ENCODE measurements at regions of chr12 and their contacts with region 1.

Region 1: DNA sequence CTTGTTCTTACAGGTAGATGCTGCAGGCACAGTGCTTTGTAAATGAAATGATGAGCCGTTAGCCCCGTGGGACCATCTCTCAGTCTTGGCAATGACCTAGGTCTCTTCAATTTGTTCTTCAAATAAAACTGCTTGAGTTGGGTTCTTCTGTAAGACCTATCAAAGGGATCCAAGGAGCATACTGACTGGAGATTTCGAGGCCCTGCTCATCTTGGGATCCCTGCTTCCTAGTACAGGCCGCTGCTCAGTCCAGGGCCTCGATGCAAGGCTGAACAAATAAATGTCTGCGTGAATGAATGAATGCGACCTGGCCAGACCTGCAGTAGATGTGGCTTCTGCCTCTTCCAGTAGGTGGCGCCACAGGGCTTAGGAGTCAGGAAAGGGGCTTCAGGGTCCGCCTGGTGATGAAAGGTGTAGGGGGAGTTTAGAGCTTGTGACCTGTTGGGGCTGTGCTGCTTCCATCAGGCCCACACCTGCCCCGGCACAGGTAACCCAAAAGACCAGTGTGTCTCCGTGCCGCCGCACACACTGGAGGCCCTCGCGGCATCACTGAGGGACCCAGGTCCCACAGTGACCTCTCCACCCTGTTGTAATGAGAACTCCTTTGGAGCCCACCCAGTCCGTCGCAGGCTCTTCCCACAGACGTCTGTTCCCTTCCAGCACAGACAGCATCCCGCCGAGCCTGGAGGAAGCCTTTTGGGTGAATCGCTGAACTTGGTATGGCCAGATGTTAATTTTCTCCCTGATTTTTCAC is 4.4 kb downstream of the CACNA1C start:
- DNase-seq: peak; percentile 62
- ATAC-seq: no peak
- H3K4me3 ChIP-seq: no peak overlapping the region
- H3K27ac ChIP-seq: no peak overlapping the region
- H3K4me1 ChIP-seq: peaks cover 5% of the 10 kb centered on the region; the same call in 1 of the 2 replicates
- H3K27me3 ChIP-seq: no peaks in the 10 kb centered on the region; the same call in 1 of the 2 replicates
- CTCF ChIP-seq: peak; percentile 71
- POLR2A ChIP-seq: no peak
- RAD21 ChIP-seq: peak; percentile 91

Region 2: DNA sequence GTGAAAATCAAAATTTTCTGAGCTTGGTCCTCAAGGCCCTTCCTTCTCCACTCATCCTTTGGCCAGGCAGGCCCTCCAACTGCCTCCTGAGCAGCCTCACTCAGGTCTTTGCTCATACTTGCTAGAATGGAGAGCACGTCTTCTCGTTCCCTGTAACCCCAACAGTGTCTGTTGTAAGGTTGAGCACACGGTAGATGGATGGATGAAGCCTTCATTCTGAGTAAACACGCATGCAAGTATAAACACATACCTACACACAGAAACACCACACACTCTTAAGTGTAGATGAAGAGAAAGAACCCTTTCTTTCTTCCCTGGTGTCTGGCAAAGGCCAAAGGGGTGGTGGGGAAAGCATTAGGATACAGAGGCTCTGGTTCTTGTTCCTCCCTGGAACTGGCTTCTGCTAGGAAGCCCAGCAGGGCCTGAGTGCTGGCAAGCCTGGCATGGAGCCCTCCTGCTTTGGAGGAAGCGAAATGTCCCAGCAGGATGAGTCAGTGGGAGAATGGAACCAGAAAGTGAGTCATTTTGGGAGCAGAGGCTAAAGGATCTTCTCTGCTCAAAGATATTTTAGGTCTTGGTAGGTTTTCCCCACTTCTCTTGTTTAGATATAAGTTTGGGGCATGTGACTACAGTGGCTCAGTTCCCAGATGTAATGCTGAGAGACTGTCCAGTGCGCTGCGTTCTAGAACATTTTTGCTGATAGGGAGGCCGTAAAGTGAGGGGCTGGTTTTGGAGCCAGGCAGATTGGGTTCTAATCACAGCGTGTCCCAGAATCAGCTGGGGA is 122.9 kb after region 1 on chr12:
- CTCF ChIA-PET with region 1: no interaction called
- POLR2A ChIA-PET with region 1: no interaction called
- dilution Hi-C with region 1: no loop called
- in situ Hi-C with region 1: no loop called
- intact Hi-C with region 1: loop called (anchors 5 kb)
- DNase-seq: peak; percentile 98
- ATAC-seq: peak; percentile 83
- H3K4me3 ChIP-seq: no peak overlapping the region
- H3K27ac ChIP-seq: peak overlapping the region; percentile 68
- H3K4me1 ChIP-seq: peaks cover 24% of the 10 kb centered on the region
- H3K27me3 ChIP-seq: no peaks in the 10 kb centered on the region
- CTCF ChIP-seq: no peak
- POLR2A ChIP-seq: no peak
- RAD21 ChIP-seq: peak; percentile 27; the same call in 1 of the 2 replicates

Region 3: DNA sequence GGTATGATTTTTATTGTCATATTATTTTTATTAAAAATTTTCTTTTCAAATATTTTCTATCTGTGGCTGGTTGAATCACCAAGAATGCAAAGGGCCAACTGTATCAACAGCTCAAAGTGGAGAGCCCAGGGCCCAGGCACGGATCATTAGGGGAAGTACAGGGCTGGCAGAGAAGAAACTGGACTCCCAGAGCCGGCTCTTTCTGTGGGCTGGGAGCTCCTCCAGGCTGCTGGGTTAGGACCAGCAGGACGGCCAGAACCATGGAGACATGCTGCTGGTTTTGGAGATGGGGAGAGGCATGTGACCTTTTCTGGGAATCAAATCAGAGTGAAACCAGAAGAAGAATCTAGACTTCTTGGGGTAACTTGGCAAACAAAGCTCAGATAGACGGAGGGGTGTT is 216.1 kb after region 1 on chr12:
- CTCF ChIA-PET with region 1: interaction called, 3 read pairs
- POLR2A ChIA-PET with region 1: no interaction called
- dilution Hi-C with region 1: no loop called
- in situ Hi-C with region 1: no loop called
- intact Hi-C with region 1: loop called (anchors 2 kb)
- DNase-seq: peak; percentile 83
- ATAC-seq: peak; percentile 78
- H3K4me3 ChIP-seq: no peak overlapping the region
- H3K27ac ChIP-seq: no peak overlapping the region
- H3K4me1 ChIP-seq: peaks cover 14% of the 10 kb centered on the region
- H3K27me3 ChIP-seq: no peaks in the 10 kb centered on the region
- CTCF ChIP-seq: peak; percentile 75
- POLR2A ChIP-seq: no peak
- RAD21 ChIP-seq: peak; percentile 81

Region 4: GRCh38 chr12:2395354-2395977 is 338.2 kb after region 1 on chr12:
- CTCF ChIA-PET with region 1: interaction called, 3 read pairs
- POLR2A ChIA-PET with region 1: no interaction called
- dilution Hi-C with region 1: no loop called
- in situ Hi-C with region 1: no loop called
- intact Hi-C with region 1: loop called (anchors 2 kb)
- DNase-seq: peak; percentile 28
- ATAC-seq: peak; percentile 57
- H3K4me3 ChIP-seq: no peak overlapping the region
- H3K27ac ChIP-seq: peak overlapping the region; percentile 60; the same call in 1 of the 2 replicates
- H3K4me1 ChIP-seq: peaks cover 12% of the 10 kb centered on the region
- H3K27me3 ChIP-seq: no peaks in the 10 kb centered on the region
- CTCF ChIP-seq: peak; percentile 69
- POLR2A ChIP-seq: no peak
- RAD21 ChIP-seq: peak; percentile 51